ENCODE measurements at regions of chr17 and their contacts with region 1.

Region 1: GRCh38 chr17:40956401-40957254 is 10.1 kb downstream of the KRT39 start:
- DNase-seq: peak; percentile 33 to 100
- H3K4me3 ChIP-seq: peak overlapping the region; percentile 33; the same call in 1 of the 2 replicates
- H3K27ac ChIP-seq: peak overlapping the region; percentile 98
- H3K4me1 ChIP-seq: peaks cover 85% of the 10 kb centered on the region
- H3K27me3 ChIP-seq: no peaks in the 10 kb centered on the region
- CTCF ChIP-seq: no peak

Region 2: GRCh38 chr17:41020345-41020744 is 63.7 kb after region 1 on chr17:
- CTCF ChIA-PET with region 1: no interaction called
- POLR2A ChIA-PET with region 1: no interaction called
- intact Hi-C with region 1: loop called (anchors 2 kb)
- DNase-seq: peak; percentile 34 to 90
- H3K4me3 ChIP-seq: no peak overlapping the region
- H3K27ac ChIP-seq: peak overlapping the region; percentile 46; the same call in 1 of the 2 replicates
- H3K4me1 ChIP-seq: peaks cover 30% of the 10 kb centered on the region
- H3K27me3 ChIP-seq: no peaks in the 10 kb centered on the region
- CTCF ChIP-seq: no peak

Region 3: DNA sequence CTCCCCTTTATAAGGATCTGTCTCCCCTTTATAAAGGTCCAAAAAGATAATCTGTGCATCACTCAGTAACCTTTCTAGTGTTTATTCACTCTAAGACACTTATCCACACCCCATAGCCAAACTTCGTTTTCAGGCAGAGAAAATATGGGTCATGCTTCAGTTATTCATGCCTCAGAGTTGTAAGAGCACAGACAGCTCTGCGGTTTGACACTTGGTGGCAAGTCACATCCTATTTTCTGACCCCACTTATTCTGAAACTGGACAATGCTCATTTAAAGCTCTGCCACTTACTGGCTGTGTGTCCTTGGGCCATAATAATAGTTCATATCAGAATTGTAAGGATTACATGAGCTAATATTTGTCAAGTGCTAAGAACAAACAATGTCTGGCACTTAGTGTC is 92.5 kb after region 1 on chr17:
- CTCF ChIA-PET with region 1: no interaction called
- POLR2A ChIA-PET with region 1: no interaction called
- intact Hi-C with region 1: loop called (anchors 5 kb)
- DNase-seq: peak; percentile 17 to 92
- H3K4me3 ChIP-seq: peak overlapping the region; percentile 33; the same call in 1 of the 2 replicates
- H3K27ac ChIP-seq: peak overlapping the region; percentile 97
- H3K4me1 ChIP-seq: peaks cover 33% of the 10 kb centered on the region
- H3K27me3 ChIP-seq: no peaks in the 10 kb centered on the region
- CTCF ChIP-seq: no peak

Region 4: GRCh38 chr17:41417576-41418015 is 461.0 kb after region 1 on chr17:
- CTCF ChIA-PET with region 1: no interaction called
- POLR2A ChIA-PET with region 1: interaction called, 14 read pairs
- intact Hi-C with region 1: no loop called
- DNase-seq: peak; percentile 69 to 98
- H3K4me3 ChIP-seq: no peak overlapping the region
- H3K27ac ChIP-seq: peak overlapping the region; percentile 89
- H3K4me1 ChIP-seq: peaks cover 76% of the 10 kb centered on the region
- H3K27me3 ChIP-seq: no peaks in the 10 kb centered on the region
- CTCF ChIP-seq: peak; percentile 82